ENCODE measurements at regions of chr10 and their contacts with region 1.

Region 1: GRCh38 chr10:26556748-26557640 is 118.9 kb downstream of the APBB1IP start:
- DNase-seq: peak; percentile 28
- ATAC-seq: peak; percentile 69
- H3K4me3 Mint-ChIP-seq: no peak overlapping the region
- H3K27ac Mint-ChIP-seq: peak overlapping the region; percentile 44
- H3K4me1 Mint-ChIP-seq: peaks cover 12% of the 10 kb centered on the region
- H3K27me3 Mint-ChIP-seq: no peaks in the 10 kb centered on the region
- CTCF ChIP-seq: peak; percentile 77

Region 2: GRCh38 chr10:26334932-26335573 is 221.9 kb before region 1 on chr10:
- CTCF ChIA-PET with region 1: interaction called, 93 read pairs
- POLR2A ChIA-PET with region 1: no interaction called
- intact Hi-C with region 1: loop called (anchors 2 kb)
- DNase-seq: peak; percentile 75
- ATAC-seq: peak; percentile 94
- H3K4me3 Mint-ChIP-seq: peak overlapping the region; percentile 69
- H3K27ac Mint-ChIP-seq: peak overlapping the region; percentile 78
- H3K4me1 Mint-ChIP-seq: peaks cover 9% of the 10 kb centered on the region
- H3K27me3 Mint-ChIP-seq: no peaks in the 10 kb centered on the region
- CTCF ChIP-seq: peak; percentile 93

Measured in activated CD8-positive, alpha-beta T cell treated with anti-CD3 and anti-CD28 coated beads for 36 hours (primary cell).